ENCODE measurements at regions of chr4 and their contacts with region 1.

Region 1: DNA sequence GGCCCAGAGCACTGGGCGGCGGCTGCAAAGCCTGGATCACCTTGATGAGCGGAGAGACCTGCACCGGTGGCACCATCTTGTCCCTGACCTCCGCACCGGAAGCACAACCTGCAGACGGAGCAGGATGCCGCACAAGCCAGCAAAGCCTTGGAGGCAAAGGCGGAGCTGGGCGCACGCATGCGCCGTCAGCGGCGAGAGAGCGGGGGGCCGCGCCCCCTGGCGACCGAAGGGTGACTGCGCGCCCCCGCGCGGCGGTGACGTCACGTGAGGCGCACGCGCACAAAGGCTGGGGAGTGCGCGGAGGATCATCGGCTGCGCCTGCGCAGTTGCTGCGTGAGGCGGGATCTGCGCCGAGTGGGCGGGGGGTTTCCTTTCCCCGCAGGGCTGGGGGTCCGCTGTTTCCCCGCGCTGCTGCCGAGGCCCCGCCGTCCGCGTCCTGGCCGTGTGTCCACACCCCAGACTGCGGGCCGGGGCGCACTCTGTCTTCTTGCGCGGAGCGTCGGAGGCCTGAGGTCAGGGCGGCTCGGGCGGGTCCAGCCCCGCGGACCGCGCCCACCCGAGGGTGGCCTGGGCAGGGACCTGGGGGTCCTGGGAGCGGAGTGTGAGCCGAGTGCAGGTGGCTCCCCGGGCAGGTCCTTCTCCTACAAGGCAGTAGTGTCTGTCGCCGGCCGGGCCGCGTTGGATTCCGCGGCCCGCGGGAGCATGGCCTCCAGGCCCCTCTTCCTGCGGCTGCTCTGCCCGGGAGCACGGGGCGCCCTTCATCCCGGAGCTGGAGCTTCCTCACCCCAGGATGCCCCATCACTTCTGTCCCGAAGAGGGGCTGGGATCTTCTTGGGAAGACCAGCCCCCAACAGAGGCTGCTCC is at the starts of genes ATP5ME and MYL5:
- DNase-seq: peak; percentile 100
- ATAC-seq: peak; percentile 94
- H3K4me3 Mint-ChIP-seq: peak within 1 kb of the TSS; percentile 85
- H3K27ac Mint-ChIP-seq: peak within 1 kb of the TSS; percentile 87
- H3K4me1 Mint-ChIP-seq: peaks cover 6% of the 10 kb centered on the region
- H3K27me3 Mint-ChIP-seq: no peaks in the 10 kb centered on the region
- total RNA-seq, gene ATP5ME: 184 to 191 TPM
- total RNA-seq, gene MYL5: 20.0 to 21.5 TPM

Region 2: GRCh38 chr4:337143-337931 is 337.1 kb before region 1 on chr4 and contains the start of gene ZNF141:
- POLR2A ChIA-PET with region 1: interaction called, 10 read pairs
- DNase-seq: peak; percentile 83
- ATAC-seq: peak; percentile 95
- H3K4me3 Mint-ChIP-seq: peak within 1 kb of the TSS; percentile 96
- H3K27ac Mint-ChIP-seq: peak within 1 kb of the TSS; percentile 100
- H3K4me1 Mint-ChIP-seq: peaks cover 20% of the 10 kb centered on the region
- H3K27me3 Mint-ChIP-seq: peaks cover 3% of the 10 kb centered on the region
- total RNA-seq, gene ZNF141: 42.1 to 43.4 TPM

Region 3: GRCh38 chr4:646460-646859 is 27.9 kb before region 1 on chr4:
- POLR2A ChIA-PET with region 1: no interaction called
- DNase-seq: no peak
- ATAC-seq: no peak
- H3K4me3 Mint-ChIP-seq: peak overlapping the region; percentile 46
- H3K27ac Mint-ChIP-seq: no peak overlapping the region
- H3K4me1 Mint-ChIP-seq: no peaks in the 10 kb centered on the region
- H3K27me3 Mint-ChIP-seq: peaks cover 4% of the 10 kb centered on the region

Region 4: DNA sequence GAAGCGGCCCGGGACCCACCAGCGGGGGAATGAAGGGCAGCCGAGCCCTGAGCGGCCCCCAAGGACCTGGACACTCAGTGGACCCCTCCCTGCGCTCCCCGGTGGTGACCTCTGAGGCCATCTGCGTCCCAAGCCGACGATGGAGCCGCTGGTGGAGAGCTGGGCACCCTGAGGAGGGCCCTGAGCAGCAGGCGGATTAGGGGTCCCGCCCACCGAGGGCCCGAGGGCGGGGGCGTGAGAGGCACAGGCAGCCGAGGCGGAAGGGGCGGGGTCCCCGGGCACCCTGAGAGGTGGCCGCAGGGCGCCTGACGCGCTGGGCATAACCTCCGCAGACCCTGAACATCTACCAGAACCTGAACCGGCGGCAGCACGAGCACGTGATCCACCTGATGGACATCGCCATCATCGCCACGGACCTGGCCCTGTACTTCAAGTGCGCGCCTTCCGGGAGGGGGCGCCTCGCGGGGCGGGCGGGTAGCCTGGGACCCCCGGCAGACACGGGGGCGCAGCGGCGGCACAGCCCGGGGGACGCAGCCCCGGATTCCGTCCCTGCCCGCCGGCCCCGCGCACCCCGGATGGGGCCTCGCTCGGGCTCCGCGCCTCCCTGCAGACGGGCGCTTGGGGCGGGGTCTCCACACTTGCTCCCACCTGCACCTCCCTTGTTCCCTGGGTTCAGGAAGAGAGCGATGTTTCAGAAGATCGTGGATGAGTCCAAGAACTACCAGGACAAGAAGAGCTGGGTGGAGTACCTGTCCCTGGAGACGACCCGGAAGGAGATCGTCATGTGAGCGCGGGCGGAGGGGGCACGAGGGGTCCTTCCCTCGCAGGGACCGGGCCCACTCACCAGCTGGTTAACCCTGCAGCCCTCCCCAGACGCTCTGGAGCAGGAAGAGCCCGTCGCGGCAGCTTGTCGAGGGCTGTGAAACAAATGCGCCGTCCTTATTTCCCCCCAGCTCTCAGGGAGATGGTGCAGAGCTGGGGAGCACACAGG is 10.7 kb before region 1 on chr4:
- POLR2A ChIA-PET with region 1: interaction called, 59 read pairs
- DNase-seq: peak; percentile 86
- ATAC-seq: peak; percentile 82
- H3K4me3 Mint-ChIP-seq: peak overlapping the region; percentile 86
- H3K27ac Mint-ChIP-seq: peak overlapping the region; percentile 90
- H3K4me1 Mint-ChIP-seq: peaks cover 6% of the 10 kb centered on the region
- H3K27me3 Mint-ChIP-seq: no peaks in the 10 kb centered on the region

Measured in activated naive CD8-positive, alpha-beta T cell treated with anti-CD3 and anti-CD28 coated beads, Interleukin-2, amount 10 ng/mL, durations not matched to agents 7 days and 5 days (primary cell).